ENCODE measurements at regions of chr13 and their contacts with region 1.

Region 1: DNA sequence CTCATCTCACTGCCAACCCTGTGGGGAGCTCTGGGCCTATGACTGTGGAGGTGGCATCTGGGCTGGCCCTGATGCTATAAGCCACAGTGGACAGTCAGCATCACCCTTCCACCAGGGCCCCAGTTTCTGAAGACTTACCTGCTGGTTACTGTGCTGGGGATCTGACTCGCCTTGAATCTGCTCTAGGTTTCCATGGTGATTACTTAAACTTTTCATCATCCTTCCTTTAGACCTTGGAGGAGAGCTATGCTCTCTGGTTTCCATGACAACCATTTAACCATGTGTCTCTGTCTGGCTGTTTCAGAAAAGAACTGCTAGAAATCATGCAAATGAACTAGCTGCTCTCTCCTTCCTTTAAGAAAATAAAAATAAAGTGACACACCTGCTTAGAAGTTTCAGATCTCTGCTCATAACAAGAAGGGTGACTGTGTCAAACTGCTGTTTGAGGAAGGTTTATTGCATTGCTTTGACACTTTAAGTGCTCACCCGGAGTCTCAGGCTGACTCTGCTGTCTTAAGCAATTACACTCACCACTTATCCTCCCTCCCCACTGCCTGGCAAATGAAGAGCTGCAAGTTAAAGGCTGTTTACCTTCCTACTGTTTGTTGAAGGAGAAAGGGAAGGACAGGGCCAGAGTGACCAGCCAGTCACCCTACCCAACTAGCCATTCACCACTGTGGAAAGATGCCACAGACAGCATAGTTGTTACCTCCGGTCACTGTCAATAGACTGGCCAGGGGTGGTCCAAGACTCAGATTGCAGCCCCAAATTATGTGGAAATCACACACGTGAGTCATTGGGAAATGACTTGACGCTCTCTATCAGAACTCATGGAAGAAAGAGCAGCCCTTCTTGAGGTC is 87.6 kb downstream of the HSPH1 start:
- DNase-seq: peak; percentile 70
- H3K4me3 Mint-ChIP-seq: no peak overlapping the region
- H3K27ac Mint-ChIP-seq: no peak overlapping the region
- H3K4me1 Mint-ChIP-seq: peaks cover 9% of the 10 kb centered on the region
- H3K27me3 Mint-ChIP-seq: peaks cover 3% of the 10 kb centered on the region

Region 2: DNA sequence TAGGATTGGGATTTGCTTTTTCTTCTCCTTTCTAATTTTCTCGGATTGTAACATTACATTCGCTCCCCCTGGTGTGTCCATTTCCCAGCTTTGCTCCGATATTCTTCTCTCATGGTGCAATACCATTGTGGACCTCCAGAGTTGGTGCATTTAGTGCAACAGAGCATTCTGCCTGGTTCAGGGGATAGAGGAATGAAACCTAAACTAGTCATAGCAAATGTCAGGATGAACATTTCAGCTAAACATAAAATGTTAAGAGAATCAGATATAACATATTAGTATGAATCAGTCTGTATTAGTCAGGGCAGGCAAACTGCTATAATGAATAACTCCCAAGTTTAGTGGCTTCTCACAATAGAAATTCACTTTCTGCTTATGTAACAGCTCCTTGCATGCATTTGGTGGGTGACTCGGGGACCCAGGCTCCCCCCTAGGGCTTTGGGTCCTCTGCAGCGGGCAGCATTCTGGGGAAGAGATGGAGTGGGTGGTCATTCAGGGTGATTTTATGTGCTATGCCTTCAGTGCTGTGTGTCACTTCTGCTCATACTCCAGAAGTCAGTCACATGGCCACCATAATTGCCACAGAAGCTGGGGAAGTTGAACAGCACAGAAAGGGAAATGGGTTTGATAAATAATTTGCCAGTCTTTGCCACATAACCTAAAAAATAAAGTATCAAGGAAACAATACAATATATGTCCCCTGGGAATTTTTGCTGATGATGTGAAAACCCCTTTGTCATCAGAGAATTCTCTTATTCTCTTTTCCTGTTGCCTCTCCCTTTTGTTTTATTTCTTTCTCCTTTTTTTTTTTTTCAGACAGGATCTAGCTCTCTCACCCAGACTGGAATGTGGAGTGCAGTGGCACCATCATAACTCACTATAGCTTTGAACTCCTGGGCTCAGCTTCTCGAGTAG is 23.3 kb before region 1 on chr13:
- CTCF ChIA-PET with region 1: interaction called, 12 read pairs
- intact Hi-C with region 1: loop called (anchors 1 kb)
- DNase-seq: no peak
- H3K4me3 Mint-ChIP-seq: no peak overlapping the region
- H3K27ac Mint-ChIP-seq: no peak overlapping the region
- H3K4me1 Mint-ChIP-seq: peaks cover 14% of the 10 kb centered on the region
- H3K27me3 Mint-ChIP-seq: peaks cover 7% of the 10 kb centered on the region

Region 3: GRCh38 chr13:31138515-31138914 is 64.4 kb after region 1 on chr13:
- CTCF ChIA-PET with region 1: no interaction called
- intact Hi-C with region 1: loop called (anchors 5 kb)
- DNase-seq: no peak
- H3K4me3 Mint-ChIP-seq: no peak overlapping the region
- H3K27ac Mint-ChIP-seq: peak overlapping the region; percentile 39
- H3K4me1 Mint-ChIP-seq: peaks cover 36% of the 10 kb centered on the region
- H3K27me3 Mint-ChIP-seq: no peaks in the 10 kb centered on the region

Region 4: DNA sequence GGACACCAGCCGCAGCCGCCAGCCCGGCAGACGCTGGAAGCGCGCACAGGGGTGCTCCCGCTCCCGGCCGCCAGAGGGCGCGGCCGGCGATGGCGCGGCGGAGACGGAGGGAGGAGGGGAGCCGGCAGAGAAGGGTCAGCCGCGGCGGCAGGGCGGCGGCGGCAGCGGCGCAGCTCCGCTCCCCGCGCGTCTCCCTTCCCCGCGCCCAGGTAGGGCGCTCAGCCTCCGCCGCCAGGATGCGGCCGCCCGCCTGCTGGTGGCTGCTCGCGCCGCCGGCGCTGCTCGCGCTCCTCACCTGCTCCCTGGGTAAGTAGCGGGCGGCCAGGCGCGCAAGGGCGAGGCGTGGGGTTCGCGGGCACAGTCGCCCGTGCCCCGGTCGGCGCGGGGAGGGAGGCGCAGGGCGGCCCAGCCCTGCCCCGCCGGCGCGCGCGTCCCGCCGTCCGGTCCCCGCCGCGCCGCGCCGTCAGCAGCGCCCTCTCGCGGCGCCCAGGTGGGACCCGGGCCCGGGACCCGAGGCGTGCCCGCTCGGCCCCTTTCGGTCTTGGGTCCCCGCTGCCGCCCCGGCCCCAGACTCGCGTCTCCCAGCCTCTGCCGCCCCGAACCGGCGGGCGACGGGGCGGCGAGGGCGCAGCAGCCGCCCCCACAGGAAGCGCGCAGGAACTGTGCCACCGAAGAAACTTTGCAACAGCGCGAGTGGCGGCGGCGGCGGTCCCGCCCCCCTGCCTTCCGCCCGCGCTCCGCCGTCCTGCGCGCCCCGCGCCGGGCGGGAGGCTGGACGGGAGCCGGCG is 126.0 kb after region 1 on chr13 and contains the start of gene B3GLCT:
- CTCF ChIA-PET with region 1: interaction called, 4 read pairs
- intact Hi-C with region 1: loop called (anchors 2 kb)
- DNase-seq: peak; percentile 65
- H3K4me3 Mint-ChIP-seq: peak within 1 kb of the TSS; percentile 83
- H3K27ac Mint-ChIP-seq: peak within 1 kb of the TSS; percentile 68
- H3K4me1 Mint-ChIP-seq: peaks cover 26% of the 10 kb centered on the region
- H3K27me3 Mint-ChIP-seq: no peaks in the 10 kb centered on the region
- total RNA-seq, gene B3GLCT: 1.2 to 1.5 TPM